ENCODE measurements at regions of chr7 and their contacts with region 1.

Region 1: GRCh38 chr7:116122972-116123595 is 87.3 kb upstream of the TES start:
- DNase-seq: no peak
- H3K4me3 ChIP-seq: no peak overlapping the region
- H3K27ac ChIP-seq: no peak overlapping the region
- H3K4me1 ChIP-seq: no peaks in the 10 kb centered on the region
- H3K27me3 ChIP-seq: no peaks in the 10 kb centered on the region
- CTCF ChIP-seq: peak in 2 of 3 experiments; percentile 43 to 69; a peak in 2 of 4 replicates
- EP300 ChIP-seq: no peak
- POLR2A ChIP-seq: no peak
- RAD21 ChIP-seq: peak; percentile 67 to 73

Region 2: DNA sequence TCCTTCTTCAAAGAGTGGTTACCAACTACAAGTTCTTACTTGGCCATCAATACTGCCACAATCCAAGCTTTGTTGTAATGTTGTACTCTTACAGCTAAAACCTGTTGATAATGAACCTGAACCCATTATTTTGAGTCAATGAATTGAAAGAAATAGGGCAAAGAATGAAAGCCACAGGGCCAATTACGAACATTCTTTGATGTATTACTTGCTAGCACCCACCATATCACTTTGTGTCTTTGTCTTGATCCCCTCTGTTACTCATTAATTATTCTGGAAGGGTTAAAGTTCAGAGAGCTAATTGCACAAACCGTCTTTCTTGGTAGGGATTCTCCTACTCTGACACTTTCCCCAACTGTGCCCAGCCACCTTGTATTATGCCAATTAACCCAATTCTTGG is 39.3 kb before region 1 on chr7:
- CTCF ChIA-PET with region 1: no interaction called
- POLR2A ChIA-PET with region 1: no interaction called
- DNase-seq: no peak
- H3K4me3 ChIP-seq: no peak overlapping the region
- H3K27ac ChIP-seq: no peak overlapping the region
- H3K4me1 ChIP-seq: no peaks in the 10 kb centered on the region
- H3K27me3 ChIP-seq: no peaks in the 10 kb centered on the region
- CTCF ChIP-seq: no peak
- EP300 ChIP-seq: no peak
- POLR2A ChIP-seq: no peak
- RAD21 ChIP-seq: no peak

Region 3: GRCh38 chr7:116138202-116138801 is 15.2 kb after region 1 on chr7:
- CTCF ChIA-PET with region 1: interaction called, 14 read pairs
- POLR2A ChIA-PET with region 1: no interaction called
- DNase-seq: no peak
- H3K4me3 ChIP-seq: no peak overlapping the region
- H3K27ac ChIP-seq: no peak overlapping the region
- H3K4me1 ChIP-seq: no peaks in the 10 kb centered on the region
- H3K27me3 ChIP-seq: no peaks in the 10 kb centered on the region
- CTCF ChIP-seq: peak in 2 of 3 experiments; percentile 59 to 70; a peak in 3 of 4 replicates
- EP300 ChIP-seq: no peak
- POLR2A ChIP-seq: no peak
- RAD21 ChIP-seq: peak; percentile 82 to 84